ENCODE measurements at regions of chr3 and their contacts with region 1.

Region 1: GRCh38 chr3:89851974-89852621 is 744.7 kb downstream of the EPHA3 start:
- DNase-seq: peak; percentile 14
- ATAC-seq: peak; percentile 63
- H3K4me3 ChIP-seq: no peak overlapping the region
- H3K27ac ChIP-seq: no peak overlapping the region
- H3K4me1 ChIP-seq: no peaks in the 10 kb centered on the region
- H3K27me3 ChIP-seq: no peaks in the 10 kb centered on the region
- CTCF ChIP-seq: peak; percentile 40
- POLR2A ChIP-seq: no peak
- RAD21 ChIP-seq: peak; percentile 47

Region 2: GRCh38 chr3:88203642-88204055 is 1648.4 kb before region 1 on chr3:
- CTCF ChIA-PET with region 1: no interaction called
- POLR2A ChIA-PET with region 1: no interaction called
- dilution Hi-C with region 1: no loop called
- in situ Hi-C with region 1: loop called (anchors 25 kb)
- intact Hi-C with region 1: loop called (anchors 1 kb)
- DNase-seq: peak; percentile 67
- ATAC-seq: peak; percentile 100
- H3K4me3 ChIP-seq: no peak overlapping the region
- H3K27ac ChIP-seq: no peak overlapping the region
- H3K4me1 ChIP-seq: no peaks in the 10 kb centered on the region
- H3K27me3 ChIP-seq: 0 out of 2 replicates have a peak, but pooled peaks cover 1% of the 10 kb centered on the region
- CTCF ChIP-seq: peak; percentile 83
- POLR2A ChIP-seq: no peak
- RAD21 ChIP-seq: peak; percentile 87

Region 3: DNA sequence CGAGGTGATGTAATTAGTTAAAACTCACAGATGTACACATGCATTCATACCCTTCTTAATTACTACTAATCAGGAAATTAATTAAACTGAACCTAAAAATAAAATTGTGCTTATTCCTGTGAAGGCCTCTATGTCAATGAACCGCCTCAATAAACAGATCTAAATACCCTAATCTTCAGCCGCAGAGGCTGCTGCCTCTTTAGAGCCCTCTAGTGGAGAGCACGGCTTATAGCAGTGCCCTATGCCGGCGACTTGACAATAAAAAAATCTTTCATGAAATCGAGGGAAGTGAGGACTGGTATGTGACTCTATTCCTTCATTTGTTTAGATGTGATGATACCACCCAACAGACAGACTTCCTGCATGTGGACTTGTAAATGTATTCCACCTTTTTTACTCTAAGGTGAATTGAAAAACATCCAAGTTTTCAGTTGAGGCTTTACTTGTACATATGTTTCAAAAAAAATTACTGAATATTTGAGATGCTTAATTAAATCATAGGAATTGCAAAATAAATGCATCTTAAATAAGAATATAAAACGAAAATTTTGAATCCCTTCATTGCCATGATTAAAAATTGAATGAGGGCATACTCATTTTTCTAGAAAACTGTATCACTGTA is 753.0 kb before region 1 on chr3:
- CTCF ChIA-PET with region 1: no interaction called
- POLR2A ChIA-PET with region 1: no interaction called
- dilution Hi-C with region 1: no loop called
- in situ Hi-C with region 1: no loop called
- intact Hi-C with region 1: loop called (anchors 1 kb)
- DNase-seq: peak; percentile 56
- ATAC-seq: peak; percentile 96
- H3K4me3 ChIP-seq: no peak overlapping the region
- H3K27ac ChIP-seq: no peak overlapping the region
- H3K4me1 ChIP-seq: no peaks in the 10 kb centered on the region
- H3K27me3 ChIP-seq: no peaks in the 10 kb centered on the region; the same call in 1 of the 2 replicates
- CTCF ChIP-seq: peak; percentile 90
- POLR2A ChIP-seq: no peak; the same call in 1 of the 2 replicates
- RAD21 ChIP-seq: peak; percentile 86

Region 4: GRCh38 chr3:89314454-89315098 is 537.5 kb before region 1 on chr3:
- CTCF ChIA-PET with region 1: no interaction called
- POLR2A ChIA-PET with region 1: no interaction called
- dilution Hi-C with region 1: no loop called
- in situ Hi-C with region 1: no loop called
- intact Hi-C with region 1: loop called (anchors 10 kb)
- DNase-seq: peak; percentile 44
- ATAC-seq: peak; percentile 63
- H3K4me3 ChIP-seq: no peak overlapping the region
- H3K27ac ChIP-seq: no peak overlapping the region
- H3K4me1 ChIP-seq: no peaks in the 10 kb centered on the region
- H3K27me3 ChIP-seq: no peaks in the 10 kb centered on the region
- CTCF ChIP-seq: peak; percentile 18; the same call in 1 of the 2 replicates
- POLR2A ChIP-seq: no peak
- RAD21 ChIP-seq: 0 out of 2 replicates have a peak, but pooled peaks have one; percentile 7

Region 5: GRCh38 chr3:89560546-89560945 is 291.6 kb before region 1 on chr3:
- CTCF ChIA-PET with region 1: no interaction called
- POLR2A ChIA-PET with region 1: no interaction called
- dilution Hi-C with region 1: no loop called
- in situ Hi-C with region 1: no loop called
- intact Hi-C with region 1: loop called (anchors 10 kb)
- DNase-seq: peak; percentile 54
- ATAC-seq: peak; percentile 27
- H3K4me3 ChIP-seq: no peak overlapping the region
- H3K27ac ChIP-seq: no peak overlapping the region; the same call in 1 of the 2 replicates
- H3K4me1 ChIP-seq: no peaks in the 10 kb centered on the region
- H3K27me3 ChIP-seq: no peaks in the 10 kb centered on the region
- CTCF ChIP-seq: no peak
- POLR2A ChIP-seq: no peak
- RAD21 ChIP-seq: no peak

Region 6: DNA sequence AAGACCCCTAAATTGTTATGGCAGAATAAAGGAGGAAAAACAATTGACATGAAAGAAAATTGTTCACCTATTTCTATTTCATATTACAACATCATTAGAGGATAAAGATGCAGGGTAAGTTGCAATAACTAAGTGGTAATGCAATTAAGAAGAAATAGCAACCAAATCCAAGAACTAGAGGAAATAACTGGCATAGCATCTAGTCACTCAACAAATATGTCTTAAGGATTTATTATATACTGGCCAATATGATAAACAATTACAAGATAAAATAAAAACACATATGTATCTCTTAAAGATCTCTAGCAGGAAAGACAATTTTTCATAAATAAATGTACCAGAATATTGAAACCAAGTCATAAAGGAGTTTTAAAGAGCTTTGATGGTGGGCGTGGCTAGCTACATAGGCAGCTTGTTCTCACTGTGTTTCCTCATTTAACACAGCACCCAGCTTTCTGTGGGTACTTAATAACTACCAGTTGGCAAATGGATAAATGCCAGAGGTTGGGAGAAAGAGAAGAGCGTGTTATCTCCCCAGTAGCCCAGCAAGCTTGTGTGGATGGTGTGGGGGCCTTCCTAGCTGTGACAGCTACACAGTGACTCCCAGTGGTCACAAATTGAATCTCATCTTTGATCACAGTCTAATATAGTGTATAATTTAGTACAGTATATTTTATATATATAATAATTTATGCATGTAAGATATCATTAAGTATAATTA is 239.3 kb after region 1 on chr3:
- CTCF ChIA-PET with region 1: no interaction called
- POLR2A ChIA-PET with region 1: no interaction called
- dilution Hi-C with region 1: no loop called
- in situ Hi-C with region 1: no loop called
- intact Hi-C with region 1: loop called (anchors 2 kb)
- DNase-seq: peak; percentile 34
- ATAC-seq: peak; percentile 95
- H3K4me3 ChIP-seq: no peak overlapping the region
- H3K27ac ChIP-seq: no peak overlapping the region
- H3K4me1 ChIP-seq: no peaks in the 10 kb centered on the region
- H3K27me3 ChIP-seq: no peaks in the 10 kb centered on the region
- CTCF ChIP-seq: peak; percentile 47
- POLR2A ChIP-seq: no peak
- RAD21 ChIP-seq: peak; percentile 64

Measured in IMR-90 (cell line).